Activated CD4-positive, alpha-beta T cell treated with anti-CD3 and anti-CD28 coated beads for 36 hours (primary cell): ENCODE measurements at regions of chr7 and their contacts with region 1.

Region 1: GRCh38 chr7:39987476-39988347 is 37.7 kb downstream of the CDK13 start:
- DNase-seq: peak; percentile 28
- ATAC-seq: peak; percentile 63
- H3K4me3 Mint-ChIP-seq: peak overlapping the region; percentile 41
- H3K27ac Mint-ChIP-seq: peak overlapping the region; percentile 73
- H3K4me1 Mint-ChIP-seq: peaks cover 50% of the 10 kb centered on the region
- H3K27me3 Mint-ChIP-seq: no peaks in the 10 kb centered on the region

Region 2: GRCh38 chr7:39958038-39958437 is 29.7 kb before region 1 on chr7:
- CTCF ChIA-PET with region 1: interaction called, 9 read pairs
- POLR2A ChIA-PET with region 1: no interaction called
- intact Hi-C with region 1: loop called in 1 of 2 experiments (anchors 2 kb)
- DNase-seq: no peak
- ATAC-seq: no peak
- H3K4me3 Mint-ChIP-seq: no peak overlapping the region
- H3K27ac Mint-ChIP-seq: no peak overlapping the region
- H3K4me1 Mint-ChIP-seq: peaks cover 70% of the 10 kb centered on the region
- H3K27me3 Mint-ChIP-seq: no peaks in the 10 kb centered on the region